Upper lobe of right lung (tissue), 1 donor: ENCODE measurements at regions of chr14 and their contacts with region 1.

Region 1: GRCh38 chr14:99628832-99629618 is 15.9 kb upstream of the HHIPL1 start:
- DNase-seq: peak; percentile 90
- ATAC-seq: peak; percentile 95
- H3K4me3 ChIP-seq: no peak overlapping the region
- H3K27ac ChIP-seq: no peak overlapping the region
- H3K4me1 ChIP-seq: no peaks in the 10 kb centered on the region
- H3K27me3 ChIP-seq: no peaks in the 10 kb centered on the region
- CTCF ChIP-seq: peak; percentile 99

Region 2: GRCh38 chr14:99518441-99519346 is 110.3 kb before region 1 on chr14:
- intact Hi-C with region 1: loop called (anchors 5 kb)
- DNase-seq: peak; percentile 88
- ATAC-seq: peak; percentile 86
- H3K4me3 ChIP-seq: no peak overlapping the region
- H3K27ac ChIP-seq: no peak overlapping the region
- H3K4me1 ChIP-seq: peaks cover 9% of the 10 kb centered on the region
- H3K27me3 ChIP-seq: no peaks in the 10 kb centered on the region
- CTCF ChIP-seq: peak; percentile 97

Region 3: DNA sequence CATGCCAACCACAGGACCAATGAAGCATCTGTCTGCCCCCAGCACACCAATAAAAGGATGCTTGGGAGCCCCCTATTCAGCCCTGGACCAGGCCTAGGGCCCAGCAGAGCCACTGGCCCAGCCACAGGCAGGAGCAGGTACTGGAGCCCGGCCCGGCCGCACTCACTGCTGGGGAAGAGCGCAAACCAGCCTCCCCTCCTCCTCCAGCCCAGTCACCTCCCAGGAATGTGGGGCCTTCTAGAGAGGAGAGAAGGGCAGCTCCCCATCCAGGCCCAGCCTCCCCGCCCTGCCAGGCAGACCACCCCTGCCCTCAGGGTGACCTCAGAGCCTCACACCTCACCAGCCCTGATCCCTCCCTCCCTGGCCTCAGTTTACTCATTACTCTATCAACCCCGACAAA is 91.6 kb before region 1 on chr14:
- intact Hi-C with region 1: no loop called
- DNase-seq: no peak
- ATAC-seq: peak; percentile 73
- H3K4me3 ChIP-seq: no peak overlapping the region
- H3K27ac ChIP-seq: no peak overlapping the region
- H3K4me1 ChIP-seq: no peaks in the 10 kb centered on the region
- H3K27me3 ChIP-seq: no peaks in the 10 kb centered on the region
- CTCF ChIP-seq: no peak